GM13976 (cell line): ENCODE measurements at regions of chr12 and their contacts with region 1.

Region 1: GRCh38 chr12:7806863-7807487 is 17.8 kb downstream of the NANOG start:
- DNase-seq: peak; percentile 69
- CTCF ChIP-seq: peak; percentile 76

Region 2: DNA sequence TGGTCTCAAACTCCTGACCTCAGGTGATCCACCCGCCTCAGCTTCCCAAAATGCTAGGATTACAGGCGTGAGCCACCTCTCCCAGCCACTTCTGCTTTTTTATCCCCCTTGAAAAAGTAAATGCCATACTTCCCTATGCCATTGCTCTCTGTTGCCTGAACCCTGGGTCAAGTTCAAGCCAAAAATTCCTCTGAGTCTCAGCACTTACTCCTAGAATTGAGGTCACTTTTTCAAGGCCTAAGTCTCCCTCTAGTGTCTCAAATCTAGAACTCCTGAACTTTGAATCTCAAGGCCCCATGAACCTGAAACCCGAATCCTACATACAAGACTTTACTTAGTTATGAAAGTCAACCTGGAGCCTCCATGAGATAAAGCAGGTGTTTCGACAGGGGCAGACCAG is 139.8 kb before region 1 on chr12:
- in situ Hi-C with region 1: no loop called
- DNase-seq: no peak
- CTCF ChIP-seq: no peak

Region 3: DNA sequence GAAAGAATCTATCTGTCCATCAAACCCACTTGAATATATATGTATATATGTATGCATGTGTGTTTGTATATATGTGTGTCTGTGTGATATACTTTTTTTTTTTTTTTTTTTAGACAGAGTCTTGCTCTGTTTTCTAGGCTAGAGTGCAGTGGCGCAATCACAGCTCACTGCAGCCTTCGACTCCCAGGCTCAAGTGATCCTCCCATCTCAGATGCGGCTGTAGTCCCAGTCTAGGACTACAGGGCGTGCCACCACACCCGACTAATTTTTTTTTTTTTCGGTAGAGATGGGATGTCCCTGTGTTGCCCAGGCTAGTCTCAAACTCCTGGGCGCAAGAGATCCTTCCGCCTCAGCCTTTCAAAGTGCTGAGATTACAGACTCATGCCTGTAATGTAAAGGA is 128.2 kb before region 1 on chr12:
- in situ Hi-C with region 1: loop called (anchors 5 kb)
- DNase-seq: no peak
- CTCF ChIP-seq: no peak